GM18951 (cell line): ENCODE measurements at regions of chr1 and their contacts with region 1.

Region 1: DNA sequence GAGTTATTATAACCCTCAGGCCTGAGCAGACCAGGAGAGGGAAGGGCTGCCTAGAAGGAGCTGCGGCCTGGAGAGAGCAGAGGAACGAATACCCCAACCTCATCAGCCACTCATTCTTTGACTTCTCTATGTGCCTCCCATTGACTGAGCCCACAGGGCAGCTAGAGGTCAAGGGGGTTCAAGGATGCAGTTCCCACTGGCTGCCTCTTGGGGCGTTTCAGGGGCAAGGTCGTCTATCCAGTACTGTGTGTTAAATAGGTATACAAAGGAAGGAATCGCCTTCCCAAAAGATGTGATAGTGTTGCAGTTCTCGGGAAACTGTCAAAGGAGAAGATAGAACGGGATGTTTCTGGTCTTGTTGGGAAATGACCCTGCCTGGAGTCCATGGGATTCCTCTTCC is 250.6 kb downstream of the PRDM2 start:
- POLR2A ChIP-seq: no peak

Region 2: GRCh38 chr1:13543451-13544220 is 407.0 kb before region 1 on chr1:
- in situ Hi-C with region 1: no loop called
- POLR2A ChIP-seq: no peak

Region 3: GRCh38 chr1:13830616-13831280 is 119.9 kb before region 1 on chr1:
- in situ Hi-C with region 1: loop called (anchors 10 kb)
- POLR2A ChIP-seq: no peak

Region 4: GRCh38 chr1:14140831-14141401 is 190.3 kb after region 1 on chr1:
- in situ Hi-C with region 1: no loop called
- POLR2A ChIP-seq: no peak